Esophagus muscularis mucosa (tissue), 4 donors: ENCODE measurements at regions of chr3 and their contacts with region 1.

Region 1: DNA sequence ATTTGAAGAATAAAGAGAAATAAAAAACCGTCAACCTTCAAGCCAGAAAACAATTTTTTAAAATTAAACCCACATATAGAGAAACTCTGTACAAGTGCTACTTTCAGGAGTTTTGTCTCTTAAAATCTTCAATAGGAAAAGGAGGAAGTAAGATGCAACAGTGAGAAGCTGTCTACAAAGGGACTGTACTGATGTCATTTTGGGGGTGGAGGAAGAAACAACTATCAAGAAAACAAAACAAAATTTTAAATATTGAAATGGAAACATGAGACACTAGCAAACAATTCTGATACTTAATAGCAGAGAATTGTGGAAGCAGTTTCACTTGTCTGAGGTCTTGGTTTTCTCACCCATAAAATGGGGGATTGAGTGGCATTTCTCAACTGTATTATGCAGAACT is 84.4 kb downstream of the SLMAP start:
- DNase-seq: no peak
- H3K4me3 ChIP-seq: no peak overlapping the region
- H3K27ac ChIP-seq: no peak overlapping the region
- H3K4me1 ChIP-seq: peaks cover 0 to 11% (median 5%) of the 10 kb centered on the region in 4 donors
- H3K27me3 ChIP-seq: no peaks in the 10 kb centered on the region
- CTCF ChIP-seq: no peak
- EP300 ChIP-seq: no peak
- POLR2A ChIP-seq: no peak

Region 2: GRCh38 chr3:57675530-57675929 is 164.9 kb before region 1 on chr3:
- intact Hi-C with region 1: loop called (anchors 10 kb)
- DNase-seq: no peak
- H3K4me3 ChIP-seq: no peak overlapping the region
- H3K27ac ChIP-seq: no peak overlapping the region
- H3K4me1 ChIP-seq: peaks cover 26 to 60% (median 39%) of the 10 kb centered on the region in 4 donors
- H3K27me3 ChIP-seq: no peaks in the 10 kb centered on the region
- CTCF ChIP-seq: no peak
- EP300 ChIP-seq: no peak
- POLR2A ChIP-seq: no peak

Region 3: DNA sequence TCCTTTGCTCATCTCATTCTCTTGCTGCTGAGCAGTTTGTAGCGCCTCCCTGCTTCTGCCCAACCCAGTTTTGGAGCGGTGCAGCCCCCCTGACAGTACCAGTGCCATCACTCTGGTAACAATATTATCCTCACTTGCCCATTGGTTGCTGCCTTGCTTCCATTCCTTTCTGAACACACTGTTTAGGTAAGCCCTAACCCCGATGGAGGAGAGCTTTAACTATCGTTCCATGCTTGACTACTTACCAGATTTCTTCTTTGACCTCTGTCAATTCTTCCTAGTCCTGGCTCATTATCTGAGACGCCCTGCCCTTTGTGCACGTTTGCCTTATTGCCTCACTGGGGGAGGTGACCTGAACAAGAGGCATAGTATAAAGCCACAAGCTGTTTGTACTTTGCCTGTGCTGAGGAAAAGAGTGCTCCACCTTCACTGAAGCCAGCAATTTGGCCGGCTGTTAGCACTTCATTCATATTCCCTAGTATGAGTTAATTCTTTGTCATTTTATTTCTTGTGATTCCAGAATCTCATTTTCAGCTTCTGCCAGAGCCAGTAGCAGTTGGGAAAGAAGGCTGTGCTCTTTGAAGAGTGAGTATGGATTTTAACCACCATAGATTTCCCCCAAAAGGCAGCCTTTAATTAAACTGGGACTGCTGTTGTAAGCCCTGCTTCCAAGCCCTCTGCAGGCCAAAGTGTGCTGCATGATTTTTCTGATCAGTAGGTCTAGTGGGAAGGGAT is 409.1 kb after region 1 on chr3:
- intact Hi-C with region 1: no loop called
- DNase-seq: no peak
- H3K4me3 ChIP-seq: no peak overlapping the region
- H3K27ac ChIP-seq: peak overlapping the region in 2 of 4 donors; percentile 16 to 22
- H3K4me1 ChIP-seq: peaks cover 6 to 51% (median 40%) of the 10 kb centered on the region in 4 donors
- H3K27me3 ChIP-seq: no peaks in the 10 kb centered on the region
- CTCF ChIP-seq: no peak
- EP300 ChIP-seq: no peak
- POLR2A ChIP-seq: no peak